HepG2 (cell line): ENCODE measurements at regions of chr18 and their contacts with region 1.

Region 1: DNA sequence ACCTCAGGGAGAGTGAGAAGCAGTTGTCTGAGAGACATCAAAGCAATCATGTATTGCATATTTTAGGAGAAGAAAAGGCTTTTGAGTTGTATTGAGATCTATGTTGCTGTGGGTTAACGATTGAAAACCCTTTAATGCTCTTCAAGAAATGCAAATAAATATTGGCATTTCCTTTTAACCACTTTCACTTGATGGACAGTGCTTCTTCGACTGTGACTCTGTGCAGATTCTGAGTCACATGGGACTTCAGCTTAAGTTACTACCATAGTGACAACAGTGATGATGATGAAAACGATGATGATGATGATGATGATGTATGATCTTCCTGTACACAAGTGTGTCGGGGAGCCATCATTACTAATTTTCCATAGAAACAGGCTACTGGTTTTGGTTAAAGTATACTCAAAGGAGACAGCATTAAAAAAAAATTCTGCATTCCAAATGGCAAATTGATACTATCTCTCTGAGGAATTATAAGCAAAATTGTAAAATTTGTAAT is 181.8 kb downstream of the AKAIN1 start:
- DNase-seq: no peak
- ATAC-seq: no peak
- H3K4me3 ChIP-seq: no peak overlapping the region
- H3K27ac ChIP-seq: no peak overlapping the region
- H3K4me1 ChIP-seq: no peaks in the 10 kb centered on the region
- H3K27me3 ChIP-seq: no peaks in the 10 kb centered on the region
- CTCF ChIP-seq: no peak
- EP300 ChIP-seq: no peak
- POLR2A ChIP-seq: no peak
- RAD21 ChIP-seq: no peak

Region 2: DNA sequence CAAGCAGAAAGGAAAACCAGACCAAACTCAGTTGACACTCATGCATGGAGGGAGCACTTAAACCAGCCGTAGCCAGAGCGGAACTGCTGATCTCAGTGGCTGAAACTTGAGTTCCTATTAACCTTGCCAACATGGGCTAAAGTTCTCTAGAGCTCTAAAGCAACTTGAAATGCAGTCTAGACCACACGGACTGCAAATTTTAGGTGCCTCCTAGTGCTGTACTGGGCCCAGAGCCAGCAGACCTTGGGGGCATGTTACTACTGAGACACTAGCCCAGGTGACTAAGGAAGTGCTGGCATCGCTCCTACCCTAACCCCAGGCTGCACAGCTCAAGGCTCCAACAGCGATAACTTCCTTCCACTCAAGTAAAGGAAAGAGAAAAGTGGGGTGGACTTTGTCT is 54.7 kb before region 1 on chr18:
- CTCF ChIA-PET with region 1: no interaction called
- POLR2A ChIA-PET with region 1: no interaction called
- in situ Hi-C with region 1: no loop called
- intact Hi-C with region 1: loop called (anchors 5 kb)
- DNase-seq: no peak
- ATAC-seq: no peak
- H3K4me3 ChIP-seq: no peak overlapping the region
- H3K27ac ChIP-seq: no peak overlapping the region
- H3K4me1 ChIP-seq: no peaks in the 10 kb centered on the region
- H3K27me3 ChIP-seq: no peaks in the 10 kb centered on the region
- CTCF ChIP-seq: no peak
- EP300 ChIP-seq: no peak
- POLR2A ChIP-seq: no peak
- RAD21 ChIP-seq: no peak